MCF 10A (cell line): ENCODE measurements at regions of chr10 and their contacts with region 1.

Region 1: GRCh38 chr10:118259288-118259906 is 82.7 kb downstream of the FAM204A start:
- DNase-seq: peak; percentile 56
- H3K4me3 Mint-ChIP-seq: no peak overlapping the region
- H3K27ac Mint-ChIP-seq: no peak overlapping the region
- H3K4me1 Mint-ChIP-seq: no peaks in the 10 kb centered on the region
- H3K27me3 Mint-ChIP-seq: peaks cover 16% of the 10 kb centered on the region
- CTCF ChIP-seq: peak; percentile 74

Region 2: DNA sequence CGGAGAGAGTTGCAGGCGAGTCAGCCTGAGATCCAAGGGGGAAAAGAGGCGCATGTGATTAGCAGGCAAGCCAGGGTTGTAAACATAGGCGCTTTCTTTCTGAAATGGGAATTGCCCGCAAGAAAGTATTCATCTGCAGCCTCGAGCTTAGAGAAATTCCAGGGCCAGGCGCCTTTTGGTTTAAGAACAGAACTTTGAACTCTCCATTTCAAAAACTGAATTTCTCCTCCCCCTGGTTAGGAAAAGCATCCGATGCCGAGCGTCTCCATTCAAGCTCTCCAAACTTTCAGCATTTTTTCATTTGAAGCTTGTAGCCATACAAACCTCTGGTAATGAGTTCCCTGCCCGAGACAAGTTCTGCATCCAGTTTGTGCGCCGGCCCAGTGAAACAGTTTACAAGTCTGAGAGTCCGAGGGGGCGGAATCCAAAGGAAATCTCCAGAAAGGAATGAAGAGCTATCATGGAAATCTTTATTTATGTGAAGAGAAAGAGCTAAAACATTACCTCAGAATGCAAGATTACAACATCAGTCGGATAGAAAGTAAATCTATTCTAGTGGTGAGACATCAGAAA is 12.8 kb after region 1 on chr10:
- CTCF ChIA-PET with region 1: interaction called, 12 read pairs
- POLR2A ChIA-PET with region 1: interaction called, 4 read pairs
- intact Hi-C with region 1: no loop called
- DNase-seq: no peak
- H3K4me3 Mint-ChIP-seq: no peak overlapping the region
- H3K27ac Mint-ChIP-seq: no peak overlapping the region
- H3K4me1 Mint-ChIP-seq: no peaks in the 10 kb centered on the region
- H3K27me3 Mint-ChIP-seq: no peaks in the 10 kb centered on the region
- CTCF ChIP-seq: no peak

Region 3: GRCh38 chr10:118557946-118558345 is 298.5 kb after region 1 on chr10:
- CTCF ChIA-PET with region 1: no interaction called
- POLR2A ChIA-PET with region 1: no interaction called
- intact Hi-C with region 1: no loop called
- DNase-seq: peak; percentile 25
- H3K4me3 Mint-ChIP-seq: no peak overlapping the region
- H3K27ac Mint-ChIP-seq: no peak overlapping the region
- H3K4me1 Mint-ChIP-seq: no peaks in the 10 kb centered on the region
- H3K27me3 Mint-ChIP-seq: peaks cover 36% of the 10 kb centered on the region
- CTCF ChIP-seq: no peak